ENCODE measurements at regions of chr3 and their contacts with region 1.

Region 1: DNA sequence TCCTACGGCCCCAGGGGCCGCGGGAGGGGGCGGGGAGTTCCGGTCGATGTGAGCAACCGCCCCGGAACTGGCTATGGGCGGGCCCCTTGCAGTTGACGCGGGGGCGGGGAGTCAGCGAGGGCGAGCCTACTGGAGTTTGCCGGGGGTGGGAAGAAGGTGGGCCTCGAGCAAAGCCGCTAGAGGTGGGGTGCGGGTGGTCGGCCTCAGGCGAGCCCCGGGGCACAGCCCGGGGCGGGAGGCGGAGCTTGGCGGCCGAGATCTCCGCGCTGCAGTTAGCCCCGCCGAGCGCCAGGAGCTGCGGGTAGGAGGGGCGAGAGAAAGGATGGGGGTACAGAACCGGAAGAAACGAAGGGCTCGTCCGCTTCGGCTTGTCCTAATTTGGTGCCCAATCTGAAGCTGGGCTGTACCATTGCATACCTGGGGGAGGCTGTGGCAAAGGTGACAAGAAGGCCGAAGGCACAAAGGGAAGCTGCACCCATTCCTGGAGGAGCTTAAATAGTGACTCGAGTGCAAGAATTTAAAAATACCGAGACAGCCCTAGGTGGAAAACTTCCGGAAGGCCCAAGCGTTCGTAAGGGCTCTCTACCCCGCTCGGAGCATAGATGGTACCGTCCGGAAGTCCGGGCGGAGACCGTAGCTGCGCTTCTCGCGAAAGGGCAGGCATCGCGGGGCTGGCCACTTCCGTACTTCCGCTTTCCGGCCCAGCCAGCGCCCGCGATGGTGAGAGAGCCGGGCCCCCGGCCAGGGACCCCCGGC is at the starts of genes ARPC4 and TADA3:
- DNase-seq: peak; percentile 94
- H3K4me3 Mint-ChIP-seq: peak within 1 kb of the TSS; percentile 94
- H3K27ac Mint-ChIP-seq: peak within 1 kb of the TSS; percentile 100
- H3K4me1 Mint-ChIP-seq: peaks cover 67% of the 10 kb centered on the region
- H3K27me3 Mint-ChIP-seq: no peaks in the 10 kb centered on the region
- total RNA-seq, gene ARPC4: 141 to 144 TPM
- total RNA-seq, gene TADA3: 62.4 to 67.6 TPM

Region 2: GRCh38 chr3:8154617-8155016 is 1638.0 kb before region 1 on chr3:
- CTCF ChIA-PET with region 1: no interaction called
- intact Hi-C with region 1: no loop called
- DNase-seq: no peak
- H3K4me3 Mint-ChIP-seq: no peak overlapping the region
- H3K27ac Mint-ChIP-seq: no peak overlapping the region
- H3K4me1 Mint-ChIP-seq: no peaks in the 10 kb centered on the region
- H3K27me3 Mint-ChIP-seq: peaks cover 3% of the 10 kb centered on the region

Region 3: GRCh38 chr3:9362731-9363530 is 429.7 kb before region 1 on chr3 and contains the start of gene THUMPD3:
- CTCF ChIA-PET with region 1: no interaction called
- intact Hi-C with region 1: loop called (anchors 2 kb)
- DNase-seq: peak; percentile 95
- H3K4me3 Mint-ChIP-seq: peak within 1 kb of the TSS; percentile 98
- H3K27ac Mint-ChIP-seq: peak within 1 kb of the TSS; percentile 99
- H3K4me1 Mint-ChIP-seq: peaks cover 26% of the 10 kb centered on the region
- H3K27me3 Mint-ChIP-seq: no peaks in the 10 kb centered on the region
- total RNA-seq, gene THUMPD3: 46.0 to 48.9 TPM

Region 4: GRCh38 chr3:9715764-9716437 is 76.7 kb before region 1 on chr3:
- CTCF ChIA-PET with region 1: no interaction called
- intact Hi-C with region 1: no loop called
- DNase-seq: peak; percentile 76
- H3K4me3 Mint-ChIP-seq: no peak overlapping the region
- H3K27ac Mint-ChIP-seq: no peak overlapping the region
- H3K4me1 Mint-ChIP-seq: peaks cover 15% of the 10 kb centered on the region
- H3K27me3 Mint-ChIP-seq: no peaks in the 10 kb centered on the region

Region 5: GRCh38 chr3:9749645-9750555 is 42.7 kb before region 1 on chr3 and contains the start of gene OGG1:
- CTCF ChIA-PET with region 1: no interaction called
- intact Hi-C with region 1: loop called (anchors 1 kb)
- DNase-seq: peak; percentile 98
- H3K4me3 Mint-ChIP-seq: peak within 1 kb of the TSS; percentile 97
- H3K27ac Mint-ChIP-seq: peak within 1 kb of the TSS; percentile 94
- H3K4me1 Mint-ChIP-seq: peaks cover 50% of the 10 kb centered on the region
- H3K27me3 Mint-ChIP-seq: no peaks in the 10 kb centered on the region
- total RNA-seq, gene OGG1: 26.1 to 28.5 TPM

Region 6: DNA sequence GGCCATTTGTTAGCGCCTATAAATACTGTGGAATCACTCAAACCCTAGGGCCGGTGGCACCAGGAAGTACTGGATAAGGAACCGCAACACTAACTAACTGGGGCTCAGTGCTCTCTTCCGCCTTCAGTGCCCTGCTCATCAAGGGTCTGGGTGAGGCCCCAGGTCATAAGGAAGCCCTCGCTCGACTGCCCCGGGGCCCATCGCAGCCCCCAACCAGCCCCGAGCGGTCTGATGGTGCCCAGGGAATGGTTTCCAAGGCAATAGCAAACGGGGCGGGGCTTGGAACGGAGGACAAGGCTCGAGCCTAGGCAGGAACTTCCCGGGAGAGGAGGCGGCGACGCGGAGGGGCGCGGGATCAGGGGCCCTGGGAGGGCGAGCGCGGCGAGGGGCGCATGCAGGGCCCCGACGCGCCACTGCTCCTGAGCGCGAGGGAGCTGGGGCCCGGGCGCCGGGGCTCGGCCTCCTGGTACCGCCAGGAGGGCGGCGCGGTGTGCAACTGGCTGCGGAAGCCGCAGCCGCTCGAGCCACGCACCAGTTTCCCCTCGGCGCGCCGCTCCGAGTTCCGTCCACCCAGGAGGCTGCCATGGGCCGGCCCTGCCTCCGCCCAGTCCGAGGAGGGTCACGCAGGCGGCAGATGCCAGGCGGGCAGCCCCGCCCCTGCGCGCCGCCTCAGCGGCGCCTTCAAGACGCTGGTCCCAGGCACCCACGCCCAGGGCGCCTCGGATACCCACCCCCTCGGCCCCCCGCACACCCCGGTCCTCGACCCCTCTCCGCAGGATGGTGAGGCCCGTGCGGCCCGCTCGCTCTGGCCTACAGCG is 17.2 kb after region 1 on chr3 and contains the start of gene TTLL3:
- CTCF ChIA-PET with region 1: interaction called, 5 read pairs
- intact Hi-C with region 1: loop called (anchors 1 kb)
- DNase-seq: peak; percentile 38
- H3K4me3 Mint-ChIP-seq: peak within 1 kb of the TSS; percentile 81
- H3K27ac Mint-ChIP-seq: peak within 1 kb of the TSS; percentile 92
- H3K4me1 Mint-ChIP-seq: peaks cover 32% of the 10 kb centered on the region
- H3K27me3 Mint-ChIP-seq: no peaks in the 10 kb centered on the region
- total RNA-seq, gene TTLL3: 46.3 to 47.1 TPM

Region 7: GRCh38 chr3:9951962-9952805 is 159.6 kb after region 1 on chr3 and contains the start of gene PRRT3:
- CTCF ChIA-PET with region 1: no interaction called
- intact Hi-C with region 1: loop called (anchors 2 kb)
- DNase-seq: peak; percentile 77
- H3K4me3 Mint-ChIP-seq: peak within 1 kb of the TSS; percentile 81
- H3K27ac Mint-ChIP-seq: peak within 1 kb of the TSS; percentile 86
- H3K4me1 Mint-ChIP-seq: peaks cover 16% of the 10 kb centered on the region
- H3K27me3 Mint-ChIP-seq: no peaks in the 10 kb centered on the region
- total RNA-seq, gene PRRT3: 5.8 to 6.7 TPM

Region 8: GRCh38 chr3:10026084-10026890 is 233.7 kb after region 1 on chr3 and contains the start of gene FANCD2:
- CTCF ChIA-PET with region 1: no interaction called
- intact Hi-C with region 1: loop called (anchors 5 kb)
- DNase-seq: peak; percentile 94
- H3K4me3 Mint-ChIP-seq: peak within 1 kb of the TSS; percentile 92
- H3K27ac Mint-ChIP-seq: peak within 1 kb of the TSS; percentile 98
- H3K4me1 Mint-ChIP-seq: peaks cover 22% of the 10 kb centered on the region
- H3K27me3 Mint-ChIP-seq: no peaks in the 10 kb centered on the region
- total RNA-seq, gene FANCD2: 86.3 to 90.8 TPM

Region 9: DNA sequence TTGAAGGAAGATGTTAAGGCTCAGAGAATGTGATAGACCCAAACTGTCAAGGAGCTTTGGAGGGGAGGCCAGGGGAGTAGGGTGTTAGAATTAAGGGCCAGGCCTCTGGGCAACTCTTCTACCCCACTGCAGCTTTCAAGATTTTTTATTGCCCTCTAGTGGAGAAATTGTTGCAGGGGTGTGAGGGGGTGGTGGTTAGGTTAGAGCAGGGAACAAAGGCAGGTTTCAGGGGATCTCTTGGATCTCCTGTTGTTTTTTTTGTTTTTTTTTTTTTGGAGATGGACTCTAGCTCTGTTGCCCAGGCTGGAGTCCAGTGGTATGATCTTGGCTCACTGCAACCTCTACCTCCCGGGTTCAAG is 529.7 kb after region 1 on chr3:
- CTCF ChIA-PET with region 1: no interaction called
- intact Hi-C with region 1: loop called (anchors 1 kb)
- DNase-seq: peak; percentile 29
- H3K4me3 Mint-ChIP-seq: no peak overlapping the region
- H3K27ac Mint-ChIP-seq: no peak overlapping the region
- H3K4me1 Mint-ChIP-seq: peaks cover 23% of the 10 kb centered on the region
- H3K27me3 Mint-ChIP-seq: peaks cover 1% of the 10 kb centered on the region

Measured in activated naive CD4-positive, alpha-beta T cell treated with anti-CD3 and anti-CD28 coated beads for 36 hours (primary cell).